CD8-positive, alpha-beta T cell (primary cell): ENCODE measurements at regions of chr11 and their contacts with region 1.

Region 1: GRCh38 chr11:250740-251299 is 14.0 kb downstream of the PSMD13 start:
- DNase-seq: peak; percentile 75 to 89 (median 85)
- ATAC-seq: peak; percentile 99
- H3K4me3 ChIP-seq: no peak overlapping the region
- H3K4me3 Mint-ChIP-seq: peak overlapping the region; percentile 31
- H3K27ac ChIP-seq: peak overlapping the region in 1 of 2 experiments; percentile 10
- H3K27ac Mint-ChIP-seq: peak overlapping the region; percentile 92
- H3K4me1 ChIP-seq: peaks cover 5% of the 10 kb centered on the region
- H3K4me1 Mint-ChIP-seq: peaks cover 15% of the 10 kb centered on the region
- H3K27me3 ChIP-seq: no peaks in the 10 kb centered on the region
- H3K27me3 Mint-ChIP-seq: no peaks in the 10 kb centered on the region
- CTCF ChIP-seq: peak; percentile 77

Region 2: DNA sequence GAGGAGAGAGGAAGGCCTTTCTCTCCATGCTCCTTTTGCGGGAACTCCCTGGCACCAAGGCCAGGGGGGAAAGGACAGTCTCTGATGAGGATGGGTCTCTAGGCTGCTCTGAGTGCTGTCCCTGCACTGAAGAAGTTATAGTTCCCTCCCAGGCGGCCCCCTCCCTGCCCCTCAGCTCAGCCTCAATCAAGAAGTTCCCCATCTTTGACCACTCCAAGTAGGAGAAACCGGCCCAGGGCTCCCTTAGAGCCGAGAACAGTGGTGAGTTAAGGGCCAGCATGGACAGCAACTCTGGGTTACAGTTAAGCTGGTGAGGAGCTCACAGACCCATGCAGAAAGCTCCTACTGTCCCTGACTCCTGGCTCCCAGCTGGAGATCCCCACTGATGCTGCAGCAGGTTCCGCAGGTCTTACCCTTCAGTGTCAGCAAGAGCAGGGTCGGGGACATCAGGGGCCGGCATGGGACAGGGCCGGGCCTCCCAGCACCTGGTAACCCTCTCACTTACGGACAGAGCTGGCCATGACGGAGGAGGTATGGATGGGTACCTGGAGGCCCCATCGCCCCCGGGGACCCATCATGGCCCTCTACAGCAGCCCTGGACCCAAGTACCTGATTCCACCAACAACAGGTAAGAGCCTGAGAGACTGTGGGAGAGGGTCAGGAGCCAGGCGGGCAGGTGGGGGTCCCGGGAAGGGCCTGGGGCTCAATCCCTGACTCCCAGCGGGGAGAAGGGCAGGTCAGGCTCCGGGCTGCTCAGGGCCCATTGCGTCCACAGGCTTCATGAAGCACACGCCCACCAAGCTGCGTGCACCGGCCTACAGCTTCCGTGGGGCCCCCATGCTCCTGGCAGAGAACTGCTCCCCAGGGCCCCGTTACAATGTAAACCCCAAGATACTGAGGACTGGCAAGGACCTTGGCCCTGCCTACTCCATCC is 53.8 kb before region 1 on chr11:
- CTCF ChIA-PET with region 1: no interaction called
- POLR2A ChIA-PET with region 1: no interaction called
- intact Hi-C with region 1: no loop called
- DNase-seq: peak in 1 of 9 experiments; percentile 2
- ATAC-seq: no peak
- H3K4me3 ChIP-seq: no peak overlapping the region
- H3K4me3 Mint-ChIP-seq: no peak overlapping the region
- H3K27ac ChIP-seq: no peak overlapping the region
- H3K27ac Mint-ChIP-seq: no peak overlapping the region
- H3K4me1 ChIP-seq: peaks cover 10% of the 10 kb centered on the region
- H3K4me1 Mint-ChIP-seq: peaks cover 10% of the 10 kb centered on the region
- H3K27me3 ChIP-seq: no peaks in the 10 kb centered on the region
- H3K27me3 Mint-ChIP-seq: no peaks in the 10 kb centered on the region
- CTCF ChIP-seq: no peak

Region 3: GRCh38 chr11:236774-237767 is 13.7 kb before region 1 on chr11 and contains the start of gene PSMD13:
- CTCF ChIA-PET with region 1: interaction called, 21 read pairs
- POLR2A ChIA-PET with region 1: interaction called, 3 read pairs
- intact Hi-C with region 1: no loop called
- DNase-seq: peak; percentile 74 to 94 (median 88)
- ATAC-seq: peak; percentile 72
- H3K4me3 ChIP-seq: peak within 1 kb of the TSS; percentile 83 to 100
- H3K4me3 Mint-ChIP-seq: peak within 1 kb of the TSS; percentile 96
- H3K27ac ChIP-seq: peak within 1 kb of the TSS; percentile 99 to 100
- H3K27ac Mint-ChIP-seq: peak within 1 kb of the TSS; percentile 99
- H3K4me1 ChIP-seq: peaks cover 24% of the 10 kb centered on the region
- H3K4me1 Mint-ChIP-seq: peaks cover 59% of the 10 kb centered on the region
- H3K27me3 ChIP-seq: no peaks in the 10 kb centered on the region
- H3K27me3 Mint-ChIP-seq: no peaks in the 10 kb centered on the region
- CTCF ChIP-seq: no peak
- total RNA-seq, gene PSMD13: 74.3 to 82.8 TPM

Region 4: GRCh38 chr11:279966-280582 is 29.3 kb after region 1 on chr11:
- CTCF ChIA-PET with region 1: interaction called, 117 read pairs
- POLR2A ChIA-PET with region 1: interaction called, 54 read pairs
- intact Hi-C with region 1: loop called (anchors 2 to 5 kb)
- DNase-seq: peak in 6 of 9 experiments; percentile 60 to 77 (median 67)
- ATAC-seq: peak; percentile 62
- H3K4me3 ChIP-seq: peak overlapping the region; percentile 56 to 70
- H3K4me3 Mint-ChIP-seq: peak overlapping the region; percentile 89
- H3K27ac ChIP-seq: peak overlapping the region in 1 of 2 experiments; percentile 57
- H3K27ac Mint-ChIP-seq: peak overlapping the region; percentile 89
- H3K4me1 ChIP-seq: peaks cover 49% of the 10 kb centered on the region
- H3K4me1 Mint-ChIP-seq: peaks cover 55% of the 10 kb centered on the region
- H3K27me3 ChIP-seq: peaks cover 0 to 11% of the 10 kb centered on the region in 2 experiments
- H3K27me3 Mint-ChIP-seq: no peaks in the 10 kb centered on the region
- CTCF ChIP-seq: no peak

Region 5: GRCh38 chr11:299951-300735 is 49.3 kb after region 1 on chr11:
- CTCF ChIA-PET with region 1: interaction called, 51 read pairs
- POLR2A ChIA-PET with region 1: interaction called, 6 read pairs
- intact Hi-C with region 1: loop called (anchors 2 kb)
- DNase-seq: peak in 4 of 9 experiments; percentile 49 to 72 (median 59)
- ATAC-seq: peak; percentile 59
- H3K4me3 ChIP-seq: no peak overlapping the region
- H3K4me3 Mint-ChIP-seq: no peak overlapping the region
- H3K27ac ChIP-seq: no peak overlapping the region
- H3K27ac Mint-ChIP-seq: no peak overlapping the region
- H3K4me1 ChIP-seq: peaks cover 60% of the 10 kb centered on the region
- H3K4me1 Mint-ChIP-seq: peaks cover 56% of the 10 kb centered on the region
- H3K27me3 ChIP-seq: no peaks in the 10 kb centered on the region
- H3K27me3 Mint-ChIP-seq: no peaks in the 10 kb centered on the region
- CTCF ChIP-seq: peak; percentile 48

Region 6: DNA sequence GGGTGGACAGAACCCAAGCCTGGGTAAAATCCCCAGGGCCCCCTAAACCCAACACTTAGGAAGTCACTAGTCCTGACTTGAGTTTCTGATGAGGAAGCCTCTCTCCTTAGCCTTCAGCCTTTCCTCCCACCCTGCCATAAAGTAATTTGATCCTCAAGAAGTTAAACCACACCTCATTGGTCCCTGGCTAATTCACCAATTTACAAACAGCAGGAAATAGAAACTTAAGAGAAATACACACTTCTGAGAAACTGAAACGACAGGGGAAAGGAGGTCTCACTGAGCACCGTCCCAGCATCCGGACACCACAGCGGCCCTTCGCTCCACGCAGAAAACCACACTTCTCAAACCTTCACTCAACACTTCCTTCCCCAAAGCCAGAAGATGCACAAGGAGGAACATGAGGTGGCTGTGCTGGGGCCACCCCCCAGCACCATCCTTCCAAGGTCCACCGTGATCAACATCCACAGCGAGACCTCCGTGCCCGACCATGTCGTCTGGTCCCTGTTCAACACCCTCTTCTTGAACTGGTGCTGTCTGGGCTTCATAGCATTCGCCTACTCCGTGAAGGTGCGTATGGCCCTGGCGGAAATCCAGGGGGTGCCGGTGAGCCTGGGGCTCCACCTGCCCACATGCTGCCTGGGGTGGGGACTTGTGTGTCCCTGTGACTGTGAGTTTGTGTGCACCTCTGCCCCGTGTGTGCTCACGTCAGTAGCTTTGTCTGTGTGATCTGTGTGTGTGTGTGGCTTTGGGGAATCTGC is 63.1 kb after region 1 on chr11 and contains the start of gene IFITM1:
- CTCF ChIA-PET with region 1: interaction called, 12 read pairs
- POLR2A ChIA-PET with region 1: interaction called, 7 read pairs
- intact Hi-C with region 1: no loop called
- DNase-seq: peak in 7 of 9 experiments; percentile 54 to 86 (median 71)
- ATAC-seq: peak; percentile 49
- H3K4me3 ChIP-seq: peak within 1 kb of the TSS; percentile 95 to 97
- H3K4me3 Mint-ChIP-seq: peak within 1 kb of the TSS; percentile 95
- H3K27ac ChIP-seq: peak within 1 kb of the TSS; percentile 83 to 88
- H3K27ac Mint-ChIP-seq: peak within 1 kb of the TSS; percentile 98
- H3K4me1 ChIP-seq: peaks cover 18% of the 10 kb centered on the region
- H3K4me1 Mint-ChIP-seq: peaks cover 45% of the 10 kb centered on the region
- H3K27me3 ChIP-seq: no peaks in the 10 kb centered on the region
- H3K27me3 Mint-ChIP-seq: no peaks in the 10 kb centered on the region
- CTCF ChIP-seq: no peak
- total RNA-seq, gene IFITM1: 223 to 251 TPM

Region 7: DNA sequence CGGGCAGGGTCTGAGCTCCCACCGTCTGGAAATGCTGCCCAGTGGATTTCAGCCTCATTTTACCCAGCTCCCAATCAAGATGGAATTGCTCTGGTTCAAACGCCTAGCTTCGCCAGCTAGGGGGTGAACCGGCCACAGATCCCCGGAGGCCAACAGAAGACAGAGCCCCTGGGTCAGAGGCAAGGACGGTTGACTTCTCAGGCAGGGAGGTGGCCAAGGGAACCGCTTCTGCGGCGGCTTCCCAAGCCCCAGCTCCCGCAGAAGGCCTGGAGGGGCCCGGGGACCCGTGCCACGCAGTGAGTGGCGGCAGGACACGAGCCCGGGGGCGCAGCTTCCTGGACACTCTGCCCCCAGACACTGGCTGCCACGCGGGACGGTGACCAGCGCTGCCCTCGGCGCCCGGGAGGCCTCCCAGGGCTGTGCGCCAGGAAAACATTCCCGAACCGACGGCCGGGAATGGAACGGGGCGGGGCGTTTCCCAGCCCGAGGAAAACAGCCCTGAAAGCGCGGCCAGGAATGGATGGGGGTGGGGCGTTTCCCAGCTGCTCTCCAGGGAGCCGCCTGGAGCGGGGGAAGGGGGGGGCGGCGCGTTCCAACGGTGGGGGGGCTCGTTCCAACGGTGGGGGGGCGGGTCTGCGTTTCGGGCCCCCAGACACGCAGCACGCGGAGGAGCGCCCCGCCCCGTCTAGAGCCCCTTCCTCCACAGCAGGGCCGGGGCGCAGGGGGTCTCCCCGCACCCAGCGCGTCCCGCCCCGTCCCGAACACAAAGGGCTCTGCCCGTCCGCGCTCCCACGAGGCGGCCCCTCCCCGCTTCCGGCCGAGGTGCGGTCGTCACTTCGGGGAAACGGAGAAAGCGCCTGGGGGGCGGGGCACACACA is 105.0 kb after region 1 on chr11:
- CTCF ChIA-PET with region 1: interaction called, 108 read pairs
- POLR2A ChIA-PET with region 1: no interaction called
- intact Hi-C with region 1: no loop called
- DNase-seq: peak; percentile 64 to 94 (median 85)
- ATAC-seq: peak; percentile 61
- H3K4me3 ChIP-seq: peak overlapping the region; percentile 32 to 66
- H3K4me3 Mint-ChIP-seq: peak overlapping the region; percentile 84
- H3K27ac ChIP-seq: peak overlapping the region; percentile 76 to 86
- H3K27ac Mint-ChIP-seq: peak overlapping the region; percentile 95
- H3K4me1 ChIP-seq: peaks cover 43% of the 10 kb centered on the region
- H3K4me1 Mint-ChIP-seq: peaks cover 44% of the 10 kb centered on the region
- H3K27me3 ChIP-seq: no peaks in the 10 kb centered on the region
- H3K27me3 Mint-ChIP-seq: no peaks in the 10 kb centered on the region
- CTCF ChIP-seq: no peak

Region 8: DNA sequence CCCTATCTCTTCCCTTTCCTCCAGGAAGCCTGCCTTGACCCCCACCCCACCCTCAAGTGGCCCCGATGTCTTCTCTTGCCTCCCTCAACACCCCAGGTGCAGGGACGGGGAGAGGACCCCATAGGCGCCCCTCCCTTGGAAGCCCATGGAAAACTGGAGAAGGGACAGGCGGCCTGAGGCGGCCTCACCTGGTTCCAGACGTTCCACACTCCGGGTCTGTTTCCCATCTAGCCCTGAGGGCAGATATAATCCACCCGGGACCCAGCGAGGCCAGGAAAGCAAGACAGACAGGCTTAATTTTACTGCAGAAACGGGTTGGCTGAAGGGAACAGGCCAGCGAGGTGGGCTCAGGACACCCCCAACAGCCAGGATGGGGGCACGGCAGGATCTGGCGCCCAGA is 166.8 kb after region 1 on chr11:
- CTCF ChIA-PET with region 1: no interaction called
- POLR2A ChIA-PET with region 1: no interaction called
- intact Hi-C with region 1: no loop called
- DNase-seq: no peak
- ATAC-seq: no peak
- H3K4me3 ChIP-seq: no peak overlapping the region
- H3K4me3 Mint-ChIP-seq: peak overlapping the region; percentile 75
- H3K27ac ChIP-seq: peak overlapping the region in 1 of 2 experiments; percentile 8
- H3K27ac Mint-ChIP-seq: no peak overlapping the region
- H3K4me1 ChIP-seq: peaks cover 26% of the 10 kb centered on the region
- H3K4me1 Mint-ChIP-seq: peaks cover 27% of the 10 kb centered on the region
- H3K27me3 ChIP-seq: no peaks in the 10 kb centered on the region
- H3K27me3 Mint-ChIP-seq: no peaks in the 10 kb centered on the region
- CTCF ChIP-seq: no peak

Region 9: GRCh38 chr11:655036-655726 is 404.4 kb after region 1 on chr11:
- CTCF ChIA-PET with region 1: no interaction called
- POLR2A ChIA-PET with region 1: no interaction called
- intact Hi-C with region 1: no loop called
- DNase-seq: no peak
- ATAC-seq: no peak
- H3K4me3 ChIP-seq: no peak overlapping the region
- H3K4me3 Mint-ChIP-seq: no peak overlapping the region
- H3K27ac ChIP-seq: no peak overlapping the region
- H3K27ac Mint-ChIP-seq: no peak overlapping the region
- H3K4me1 ChIP-seq: no peaks in the 10 kb centered on the region
- H3K4me1 Mint-ChIP-seq: no peaks in the 10 kb centered on the region
- H3K27me3 ChIP-seq: no peaks in the 10 kb centered on the region
- H3K27me3 Mint-ChIP-seq: no peaks in the 10 kb centered on the region
- CTCF ChIP-seq: no peak